PC-9 (cell line): ENCODE measurements at regions of chr17 and their contacts with region 1.

Region 1: GRCh38 chr17:9575381-9576101 is at the start of gene STX8:
- DNase-seq: peak; percentile 57 to 88
- H3K4me3 ChIP-seq: peak within 1 kb of the TSS; percentile 82
- H3K27ac ChIP-seq: no peak within 1 kb of the TSS
- H3K4me1 ChIP-seq: no peaks in the 10 kb centered on the region
- H3K27me3 ChIP-seq: no peaks in the 10 kb centered on the region
- CTCF ChIP-seq: no peak
- total RNA-seq, gene STX8: 49.2 and 60.6 TPM in 2 replicates

Region 2: GRCh38 chr17:8785547-8786413 is 789.8 kb before region 1 on chr17:
- CTCF ChIA-PET with region 1: no interaction called
- POLR2A ChIA-PET with region 1: interaction called, 35 read pairs
- intact Hi-C with region 1: no loop called
- DNase-seq: peak in 1 of 2 experiments; percentile 70
- H3K4me3 ChIP-seq: no peak overlapping the region
- H3K27ac ChIP-seq: no peak overlapping the region
- H3K4me1 ChIP-seq: no peaks in the 10 kb centered on the region
- H3K27me3 ChIP-seq: peaks cover 37% of the 10 kb centered on the region
- CTCF ChIP-seq: peak; percentile 71

Region 3: DNA sequence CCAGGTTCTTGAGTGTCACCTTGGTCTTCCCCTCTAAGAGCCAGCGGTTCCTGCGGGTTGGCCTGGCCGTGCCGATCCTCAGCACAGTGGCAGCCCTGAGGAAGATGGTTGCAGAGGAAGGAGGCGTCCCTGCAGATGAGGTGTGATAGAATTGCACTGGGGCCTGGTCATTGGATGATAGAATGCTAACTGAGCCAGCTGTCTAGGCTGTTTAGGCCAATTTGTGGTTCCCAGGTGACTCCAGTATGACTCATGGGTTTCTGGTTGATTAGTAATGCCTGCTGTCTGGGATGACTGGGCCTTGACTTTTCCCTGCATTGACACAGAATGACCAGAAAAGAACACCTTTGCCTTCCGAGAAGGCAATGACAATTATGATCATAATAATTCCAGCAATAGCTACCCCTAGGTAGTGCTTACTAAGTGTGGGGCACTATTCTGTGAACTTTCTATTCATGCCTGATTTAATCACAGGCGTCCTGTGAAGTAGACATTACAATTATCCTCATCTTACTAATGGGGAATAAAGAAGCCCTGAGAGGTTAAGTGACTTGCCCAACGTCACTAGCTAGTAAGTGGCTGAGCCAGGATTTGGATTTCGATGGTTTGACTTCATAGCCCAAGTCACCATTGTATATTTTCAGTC is 101.3 kb after region 1 on chr17:
- CTCF ChIA-PET with region 1: interaction called, 3 read pairs
- POLR2A ChIA-PET with region 1: interaction called, 7 read pairs
- intact Hi-C with region 1: loop called (anchors 1 kb)
- DNase-seq: peak; percentile 83 to 91
- H3K4me3 ChIP-seq: no peak overlapping the region
- H3K27ac ChIP-seq: peak overlapping the region; percentile 83
- H3K4me1 ChIP-seq: peaks cover 25% of the 10 kb centered on the region
- H3K27me3 ChIP-seq: no peaks in the 10 kb centered on the region
- CTCF ChIP-seq: no peak

Region 4: GRCh38 chr17:9768381-9768934 is 192.9 kb after region 1 on chr17:
- CTCF ChIA-PET with region 1: interaction called, 3 read pairs
- POLR2A ChIA-PET with region 1: no interaction called
- intact Hi-C with region 1: loop called (anchors 2 kb)
- DNase-seq: peak in 1 of 2 experiments; percentile 5
- H3K4me3 ChIP-seq: no peak overlapping the region
- H3K27ac ChIP-seq: no peak overlapping the region
- H3K4me1 ChIP-seq: no peaks in the 10 kb centered on the region; the same call in 1 of the 2 replicates
- H3K27me3 ChIP-seq: no peaks in the 10 kb centered on the region
- CTCF ChIP-seq: peak; percentile 67